ENCODE measurements at regions of chr2 and their contacts with region 1.

Region 1: GRCh38 chr2:148540022-148540421 is 104.5 kb upstream of the EPC2 start:
- DNase-seq: no peak
- ATAC-seq: peak; percentile 53
- H3K4me3 Mint-ChIP-seq: no peak overlapping the region
- H3K27ac Mint-ChIP-seq: peak overlapping the region; percentile 34
- H3K4me1 Mint-ChIP-seq: peaks cover 17% of the 10 kb centered on the region
- H3K27me3 Mint-ChIP-seq: no peaks in the 10 kb centered on the region

Region 2: GRCh38 chr2:148342086-148342485 is 197.9 kb before region 1 on chr2:
- CTCF ChIA-PET with region 1: no interaction called
- DNase-seq: no peak
- ATAC-seq: no peak
- H3K4me3 Mint-ChIP-seq: no peak overlapping the region
- H3K27ac Mint-ChIP-seq: no peak overlapping the region
- H3K4me1 Mint-ChIP-seq: no peaks in the 10 kb centered on the region
- H3K27me3 Mint-ChIP-seq: no peaks in the 10 kb centered on the region

Region 3: GRCh38 chr2:148524519-148524919 is 15.5 kb before region 1 on chr2:
- CTCF ChIA-PET with region 1: interaction called, 14 read pairs
- DNase-seq: peak; percentile 75
- ATAC-seq: peak; percentile 90
- H3K4me3 Mint-ChIP-seq: no peak overlapping the region
- H3K27ac Mint-ChIP-seq: peak overlapping the region; percentile 66
- H3K4me1 Mint-ChIP-seq: peaks cover 45% of the 10 kb centered on the region
- H3K27me3 Mint-ChIP-seq: no peaks in the 10 kb centered on the region

Measured in activated CD8-positive, alpha-beta memory T cell treated with anti-CD3 and anti-CD28 coated beads, Interleukin-2, amount 10 ng/mL, durations not matched to agents 7 days and 5 days (primary cell).